Ascending aorta (tissue), 2 donors: ENCODE measurements at regions of chr9 and their contacts with region 1.

Region 1: DNA sequence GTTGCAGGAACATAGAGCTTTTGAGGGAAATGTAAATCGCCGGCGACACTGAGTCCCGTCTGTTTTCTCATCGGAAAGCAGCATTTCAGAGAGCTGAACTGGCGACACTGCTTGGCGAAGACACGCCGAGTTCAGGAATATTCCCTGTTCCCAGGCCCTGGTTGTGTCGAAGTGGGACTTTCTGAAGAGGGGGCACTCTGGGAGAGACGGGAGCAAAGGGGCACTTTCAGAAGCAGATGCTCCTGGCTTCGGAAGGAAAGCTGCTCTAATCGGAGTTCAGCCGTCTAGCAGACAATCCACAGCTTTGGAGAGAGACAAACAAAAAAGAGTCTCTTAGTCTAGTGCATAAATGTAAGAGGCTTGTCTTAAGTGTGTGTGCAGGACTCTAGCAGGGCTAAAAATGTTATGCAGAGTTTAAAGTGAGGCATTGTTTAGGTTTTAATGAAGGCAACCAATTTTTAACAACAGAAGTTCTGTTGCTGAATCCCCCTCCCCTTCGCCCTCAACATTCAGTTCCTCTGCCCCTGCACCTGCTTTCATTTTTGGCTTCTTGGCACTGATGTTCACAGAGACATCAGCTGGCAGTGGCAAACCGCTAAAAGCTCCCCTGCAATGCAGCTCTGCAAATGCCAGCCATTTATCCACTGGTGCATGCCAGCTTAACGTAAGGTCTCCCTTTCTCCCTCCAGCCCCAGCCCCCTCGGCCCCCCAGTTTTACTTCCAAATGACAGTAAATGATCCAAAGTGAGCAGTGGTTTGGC is 289.5 kb upstream of the MPDZ start:
- DNase-seq: no peak
- H3K4me3 ChIP-seq: peak overlapping the region; percentile 11 to 56
- H3K27ac ChIP-seq: peak overlapping the region; percentile 91
- H3K4me1 ChIP-seq: peaks cover 11 to 19% of the 10 kb centered on the region in 2 donors
- H3K27me3 ChIP-seq: no peaks in the 10 kb centered on the region
- CTCF ChIP-seq: no peak

Region 2: DNA sequence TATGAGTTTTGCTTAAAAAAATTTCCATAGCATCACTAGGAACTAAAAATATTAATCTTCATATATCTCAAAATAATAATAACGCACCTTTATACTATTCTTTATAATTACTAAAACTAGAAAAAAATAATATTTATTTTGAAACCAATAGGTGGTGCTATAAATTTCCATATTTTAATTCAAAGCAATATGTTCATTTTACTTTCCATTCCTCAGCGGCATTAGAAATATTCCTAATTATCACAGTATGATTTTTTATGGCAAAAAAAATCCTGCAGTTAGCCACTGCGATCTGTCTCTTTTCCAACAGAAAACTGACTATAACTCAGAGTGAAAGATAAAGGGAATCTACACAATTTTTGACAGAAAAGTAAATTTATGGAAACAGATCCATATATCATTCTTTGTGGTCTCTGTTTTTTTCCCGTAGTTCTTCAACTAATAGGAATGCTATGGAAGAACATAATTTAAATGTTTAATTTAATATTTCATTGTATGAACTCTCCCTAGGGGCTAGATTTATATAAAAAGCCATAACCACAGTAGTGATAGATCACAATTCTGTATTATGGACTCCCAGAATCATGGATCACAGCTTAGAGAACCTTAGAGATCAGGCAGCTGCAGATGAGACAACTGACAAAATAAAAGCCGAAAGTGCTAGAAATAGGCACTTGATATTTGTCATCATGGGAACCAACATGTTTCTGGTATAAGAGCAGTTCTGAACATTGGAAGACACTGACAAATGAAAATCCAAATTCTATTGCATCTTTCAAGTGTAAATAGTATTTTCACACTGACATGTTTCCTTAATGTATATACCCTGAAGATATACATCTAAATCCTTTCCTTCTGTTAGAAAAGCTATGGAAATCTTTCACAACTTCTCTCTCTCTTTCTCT is 121.8 kb before region 1 on chr9:
- intact Hi-C with region 1: loop called (anchors 5 kb)
- DNase-seq: no peak
- H3K4me3 ChIP-seq: no peak overlapping the region
- H3K27ac ChIP-seq: no peak overlapping the region
- H3K4me1 ChIP-seq: peaks cover 0 to 8% of the 10 kb centered on the region in 2 donors
- H3K27me3 ChIP-seq: no peaks in the 10 kb centered on the region
- CTCF ChIP-seq: peak in 2 of 3 experiments; percentile 17 to 31

Region 3: DNA sequence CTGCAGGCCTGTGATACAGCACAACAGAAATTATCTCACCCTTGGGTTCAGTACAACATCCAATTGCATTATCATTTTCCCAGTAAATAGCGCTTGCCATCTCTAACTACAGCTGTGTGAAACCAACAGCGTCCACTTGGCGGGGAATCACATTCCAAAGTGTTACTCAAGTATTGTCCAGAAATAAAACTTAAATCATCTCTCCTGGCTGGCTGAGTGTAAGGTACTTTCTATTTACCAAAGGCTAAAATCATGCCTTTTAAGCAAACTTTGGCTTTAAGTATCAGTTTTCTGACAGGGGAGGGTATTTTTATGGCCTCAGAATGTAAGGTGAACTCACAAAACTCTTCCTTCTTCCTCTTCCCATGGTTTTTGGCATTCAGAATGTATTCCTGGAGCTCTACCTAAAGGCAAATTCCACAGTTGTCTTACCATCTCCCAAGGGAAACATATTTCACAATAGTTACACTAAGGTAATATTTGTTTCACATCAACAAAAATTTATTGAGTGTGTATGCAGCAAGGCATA is 83.9 kb before region 1 on chr9:
- intact Hi-C with region 1: loop called (anchors 2 kb)
- DNase-seq: peak in 1 of 2 donors; percentile 87
- H3K4me3 ChIP-seq: peak overlapping the region in 1 of 2 donors; percentile 33
- H3K27ac ChIP-seq: peak overlapping the region; percentile 60 to 74
- H3K4me1 ChIP-seq: peaks cover 0 to 14% of the 10 kb centered on the region in 2 donors
- H3K27me3 ChIP-seq: no peaks in the 10 kb centered on the region
- CTCF ChIP-seq: peak in 2 of 3 experiments; percentile 8 to 14

Region 4: GRCh38 chr9:13607481-13608441 is 38.7 kb after region 1 on chr9:
- intact Hi-C with region 1: no loop called
- DNase-seq: no peak
- H3K4me3 ChIP-seq: peak overlapping the region in 1 of 2 donors; percentile 48
- H3K27ac ChIP-seq: peak overlapping the region; percentile 68 to 71
- H3K4me1 ChIP-seq: peaks cover 0 to 11% of the 10 kb centered on the region in 2 donors
- H3K27me3 ChIP-seq: no peaks in the 10 kb centered on the region
- CTCF ChIP-seq: no peak

Region 5: DNA sequence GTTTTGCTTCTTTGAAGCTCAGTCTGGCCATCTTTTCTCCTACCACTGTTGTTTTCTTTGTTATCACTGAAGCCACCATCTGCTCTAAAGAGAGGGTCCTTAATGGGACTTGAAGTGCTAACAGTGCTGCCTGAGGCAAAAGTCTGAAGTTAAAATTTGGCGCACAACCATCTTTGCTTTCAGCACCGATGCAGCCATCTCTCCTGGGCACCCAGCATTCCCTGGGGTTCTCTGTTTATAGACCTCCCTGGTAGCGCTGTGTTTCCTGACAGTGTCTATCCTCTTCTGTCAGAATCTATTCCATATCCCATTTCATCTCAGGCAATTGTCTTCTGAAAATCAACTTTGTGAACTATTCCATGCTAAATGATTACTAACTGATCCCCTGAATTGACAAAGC is 201.9 kb after region 1 on chr9:
- intact Hi-C with region 1: no loop called
- DNase-seq: no peak
- H3K4me3 ChIP-seq: no peak overlapping the region
- H3K27ac ChIP-seq: no peak overlapping the region
- H3K4me1 ChIP-seq: no peaks in the 10 kb centered on the region
- H3K27me3 ChIP-seq: no peaks in the 10 kb centered on the region
- CTCF ChIP-seq: no peak